Natural killer cell (primary cell): ENCODE measurements at regions of chr18 and their contacts with region 1.

Region 1: GRCh38 chr18:55234366-55235093 is 275.3 kb upstream of the CCDC68 start:
- DNase-seq: peak; percentile 46 to 62
- ATAC-seq: peak; percentile 58 to 86 (median 67)
- H3K4me3 ChIP-seq: no peak overlapping the region
- H3K4me3 Mint-ChIP-seq: no peak overlapping the region
- H3K27ac ChIP-seq: no peak overlapping the region
- H3K27ac Mint-ChIP-seq: no peak overlapping the region
- H3K4me1 ChIP-seq: no peaks in the 10 kb centered on the region
- H3K4me1 Mint-ChIP-seq: peaks cover 0 to 5% of the 10 kb centered on the region in 2 donors
- H3K27me3 ChIP-seq: no peaks in the 10 kb centered on the region
- H3K27me3 Mint-ChIP-seq: no peaks in the 10 kb centered on the region
- CTCF ChIP-seq: peak; percentile 65

Region 2: DNA sequence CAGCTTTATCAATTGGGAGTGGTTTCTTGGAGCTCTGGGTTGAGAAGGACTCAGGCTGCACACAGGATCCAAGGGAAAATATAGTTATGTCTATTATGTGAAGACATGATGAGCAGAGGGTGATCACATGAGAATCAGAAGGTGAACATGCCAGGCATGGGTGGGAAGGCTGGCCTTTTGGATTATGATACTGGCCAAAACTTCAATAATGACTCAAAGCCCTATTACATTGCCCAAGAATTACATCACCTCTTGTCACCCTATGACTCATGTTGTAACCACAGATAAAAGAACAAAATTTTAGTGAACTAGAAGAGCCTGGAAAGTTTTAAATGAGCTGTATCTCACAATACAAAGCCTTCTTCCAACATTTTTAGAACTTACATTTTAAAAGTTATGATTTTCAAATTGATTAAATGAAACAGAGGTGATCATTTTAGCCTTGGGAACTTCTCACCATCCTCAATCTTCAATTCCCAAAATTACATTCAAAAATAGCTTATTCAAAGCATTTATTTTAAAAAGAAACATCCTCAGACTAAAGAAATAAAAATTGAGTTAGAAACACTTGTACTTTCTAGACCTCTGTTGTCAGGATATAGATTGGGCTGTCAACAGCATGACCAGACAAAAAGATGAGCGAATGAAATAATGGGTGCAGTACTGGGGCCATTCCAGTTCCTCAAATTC is 1438.3 kb before region 1 on chr18:
- intact Hi-C with region 1: no loop called
- DNase-seq: no peak
- ATAC-seq: no peak
- H3K4me3 ChIP-seq: no peak overlapping the region
- H3K4me3 Mint-ChIP-seq: no peak overlapping the region
- H3K27ac ChIP-seq: no peak overlapping the region
- H3K27ac Mint-ChIP-seq: no peak overlapping the region
- H3K4me1 ChIP-seq: no peaks in the 10 kb centered on the region
- H3K4me1 Mint-ChIP-seq: no peaks in the 10 kb centered on the region
- H3K27me3 ChIP-seq: no peaks in the 10 kb centered on the region
- H3K27me3 Mint-ChIP-seq: no peaks in the 10 kb centered on the region
- CTCF ChIP-seq: no peak

Region 3: GRCh38 chr18:55189972-55190371 is 44.6 kb before region 1 on chr18:
- intact Hi-C with region 1: no loop called
- DNase-seq: no peak
- ATAC-seq: no peak
- H3K4me3 ChIP-seq: no peak overlapping the region
- H3K4me3 Mint-ChIP-seq: no peak overlapping the region
- H3K27ac ChIP-seq: no peak overlapping the region
- H3K27ac Mint-ChIP-seq: no peak overlapping the region
- H3K4me1 ChIP-seq: no peaks in the 10 kb centered on the region
- H3K4me1 Mint-ChIP-seq: no peaks in the 10 kb centered on the region
- H3K27me3 ChIP-seq: no peaks in the 10 kb centered on the region
- H3K27me3 Mint-ChIP-seq: peaks cover 0 to 2% of the 10 kb centered on the region in 2 donors
- CTCF ChIP-seq: no peak

Region 4: DNA sequence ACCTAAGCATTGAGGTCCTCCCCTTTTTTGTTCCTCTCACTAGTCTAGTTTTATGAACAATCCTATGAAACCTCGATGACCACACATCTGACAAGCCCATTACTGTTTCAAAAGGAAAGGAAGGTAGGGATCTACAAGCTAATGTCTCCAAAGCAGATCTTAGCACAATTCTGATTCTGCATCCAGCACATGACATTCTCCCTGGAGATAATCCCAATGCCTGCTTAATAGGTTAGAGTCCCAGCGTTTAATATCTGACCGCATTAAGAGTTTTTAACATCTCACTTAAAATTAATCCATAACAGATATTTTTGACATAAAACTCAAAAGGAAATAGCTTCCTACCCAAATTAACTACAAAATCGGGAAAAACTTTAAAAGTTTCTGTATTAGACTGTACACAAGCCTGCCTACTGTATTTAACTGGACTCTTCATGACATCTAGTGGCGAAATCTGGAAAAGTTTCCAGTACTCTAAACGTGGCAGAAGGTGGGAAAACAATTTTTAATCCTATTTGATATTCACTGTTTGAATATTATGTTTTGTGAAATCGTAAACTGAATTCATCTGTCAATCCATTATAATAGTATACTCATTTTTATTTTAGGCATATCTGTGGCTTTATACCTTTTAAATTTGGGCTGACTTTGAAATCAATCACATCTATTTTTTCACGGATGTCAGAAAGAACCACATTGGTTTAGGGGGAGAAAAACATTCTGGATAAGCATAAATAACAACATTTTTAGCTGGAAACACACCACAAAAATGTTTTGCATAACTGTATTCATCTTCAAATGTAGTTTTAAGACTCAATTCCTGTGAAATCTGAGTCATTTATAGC is 1341.5 kb after region 1 on chr18:
- intact Hi-C with region 1: loop called (anchors 1 kb)
- DNase-seq: peak in 1 of 2 donors; percentile 51
- ATAC-seq: peak in 2 of 3 donors; percentile 42 to 70
- H3K4me3 ChIP-seq: no peak overlapping the region
- H3K4me3 Mint-ChIP-seq: no peak overlapping the region
- H3K27ac ChIP-seq: no peak overlapping the region
- H3K27ac Mint-ChIP-seq: no peak overlapping the region
- H3K4me1 ChIP-seq: no peaks in the 10 kb centered on the region
- H3K4me1 Mint-ChIP-seq: peaks cover 10 to 20% of the 10 kb centered on the region in 2 donors
- H3K27me3 ChIP-seq: no peaks in the 10 kb centered on the region
- H3K27me3 Mint-ChIP-seq: peaks cover 3 to 26% of the 10 kb centered on the region in 2 donors
- CTCF ChIP-seq: peak; percentile 69